Cardiac septum (tissue), 1 donor: ENCODE measurements at regions of chr17 and their contacts with region 1.

Region 1: DNA sequence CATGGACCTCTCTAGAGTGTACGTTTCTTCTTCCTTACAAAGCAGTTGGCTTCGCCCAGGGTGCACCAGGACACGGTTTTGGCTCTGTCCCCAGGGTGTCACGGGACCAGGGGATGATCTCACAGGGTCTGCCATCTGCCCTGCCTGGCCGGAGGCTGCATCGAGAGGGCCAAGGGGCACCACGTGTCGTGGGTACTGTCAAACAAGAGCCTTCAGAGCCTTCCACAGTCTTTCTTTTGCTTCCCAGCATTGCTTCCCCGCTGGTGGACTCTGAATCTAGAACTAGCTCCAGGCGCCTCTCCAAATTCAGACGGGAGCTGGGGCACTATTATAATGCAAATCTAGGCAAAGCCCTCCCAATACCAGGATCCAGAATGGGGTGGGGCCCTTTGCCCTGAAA is 47.9 kb downstream of the MAPT start:
- DNase-seq: peak; percentile 92

Region 2: DNA sequence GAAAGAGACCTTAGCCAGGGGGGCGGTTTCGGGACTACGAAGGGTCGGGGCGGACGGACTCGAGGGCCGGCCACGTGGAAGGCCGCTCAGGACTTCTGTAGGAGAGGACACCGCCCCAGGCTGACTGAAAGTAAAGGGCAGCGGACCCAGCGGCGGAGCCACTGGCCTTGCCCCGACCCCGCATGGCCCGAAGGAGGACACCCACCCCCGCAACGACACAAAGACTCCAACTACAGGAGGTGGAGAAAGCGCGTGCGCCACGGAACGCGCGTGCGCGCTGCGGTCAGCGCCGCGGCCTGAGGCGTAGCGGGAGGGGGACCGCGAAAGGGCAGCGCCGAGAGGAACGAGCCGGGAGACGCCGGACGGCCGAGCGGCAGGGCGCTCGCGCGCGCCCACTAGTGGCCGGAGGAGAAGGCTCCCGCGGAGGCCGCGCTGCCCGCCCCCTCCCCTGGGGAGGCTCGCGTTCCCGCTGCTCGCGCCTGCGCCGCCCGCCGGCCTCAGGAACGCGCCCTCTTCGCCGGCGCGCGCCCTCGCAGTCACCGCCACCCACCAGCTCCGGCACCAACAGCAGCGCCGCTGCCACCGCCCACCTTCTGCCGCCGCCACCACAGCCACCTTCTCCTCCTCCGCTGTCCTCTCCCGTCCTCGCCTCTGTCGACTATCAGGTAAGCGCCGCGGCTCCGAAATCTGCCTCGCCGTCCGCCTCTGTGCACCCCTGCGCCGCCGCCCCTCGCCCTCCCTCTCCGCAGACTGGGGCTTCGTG is 48.1 kb before region 1 on chr17 and contains the start of gene MAPT:
- intact Hi-C with region 1: loop called (anchors 2 kb)
- DNase-seq: peak; percentile 94
- total RNA-seq, gene MAPT: 44.4 TPM